ENCODE measurements at regions of chr15 and their contacts with region 1.

Region 1: DNA sequence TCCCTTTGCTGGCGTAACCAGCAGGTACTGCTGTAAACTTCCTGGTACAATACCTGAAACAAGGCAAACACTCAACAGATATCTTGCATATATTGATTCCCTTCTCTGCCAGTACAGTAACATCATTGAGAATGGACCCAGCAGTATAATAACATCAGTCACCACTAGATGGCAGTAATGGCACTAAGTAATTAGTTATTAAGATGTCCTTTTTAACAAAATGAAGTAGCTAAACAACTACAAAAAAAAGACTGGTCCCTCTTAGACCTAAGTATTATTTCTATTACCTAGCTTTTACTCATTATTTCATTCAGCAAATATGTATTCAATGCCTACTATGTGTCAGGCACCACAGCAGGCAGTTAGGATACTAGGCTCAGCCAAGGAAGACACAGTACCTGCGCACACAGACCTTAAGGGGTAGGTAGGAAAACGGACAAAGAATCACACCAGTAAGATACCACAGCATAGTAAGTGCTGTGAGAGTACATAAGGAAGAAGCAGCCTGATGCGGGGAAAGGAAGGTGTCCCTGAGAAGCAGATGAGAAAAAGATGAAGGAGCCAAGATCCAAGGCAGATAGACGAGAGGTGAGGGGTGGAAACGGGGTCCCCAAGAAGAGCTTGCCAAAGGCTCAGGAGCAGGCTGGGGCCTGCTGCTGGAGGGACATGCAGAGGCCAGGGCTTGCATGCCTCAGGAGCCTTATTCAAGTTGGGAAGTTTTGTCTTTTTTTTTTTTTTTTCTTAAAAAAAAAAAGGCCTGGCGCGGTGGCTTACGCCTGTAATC is 102.8 kb upstream of the CHD2 start:
- DNase-seq: no peak
- ATAC-seq: peak; percentile 86
- H3K4me3 Mint-ChIP-seq: no peak overlapping the region
- H3K27ac Mint-ChIP-seq: no peak overlapping the region
- H3K4me1 Mint-ChIP-seq: peaks cover 12% of the 10 kb centered on the region
- H3K27me3 Mint-ChIP-seq: no peaks in the 10 kb centered on the region

Region 2: GRCh38 chr15:92780843-92781242 is 16.5 kb before region 1 on chr15:
- CTCF ChIA-PET with region 1: no interaction called
- DNase-seq: no peak
- ATAC-seq: no peak
- H3K4me3 Mint-ChIP-seq: no peak overlapping the region
- H3K27ac Mint-ChIP-seq: no peak overlapping the region
- H3K4me1 Mint-ChIP-seq: no peaks in the 10 kb centered on the region
- H3K27me3 Mint-ChIP-seq: no peaks in the 10 kb centered on the region

Region 3: DNA sequence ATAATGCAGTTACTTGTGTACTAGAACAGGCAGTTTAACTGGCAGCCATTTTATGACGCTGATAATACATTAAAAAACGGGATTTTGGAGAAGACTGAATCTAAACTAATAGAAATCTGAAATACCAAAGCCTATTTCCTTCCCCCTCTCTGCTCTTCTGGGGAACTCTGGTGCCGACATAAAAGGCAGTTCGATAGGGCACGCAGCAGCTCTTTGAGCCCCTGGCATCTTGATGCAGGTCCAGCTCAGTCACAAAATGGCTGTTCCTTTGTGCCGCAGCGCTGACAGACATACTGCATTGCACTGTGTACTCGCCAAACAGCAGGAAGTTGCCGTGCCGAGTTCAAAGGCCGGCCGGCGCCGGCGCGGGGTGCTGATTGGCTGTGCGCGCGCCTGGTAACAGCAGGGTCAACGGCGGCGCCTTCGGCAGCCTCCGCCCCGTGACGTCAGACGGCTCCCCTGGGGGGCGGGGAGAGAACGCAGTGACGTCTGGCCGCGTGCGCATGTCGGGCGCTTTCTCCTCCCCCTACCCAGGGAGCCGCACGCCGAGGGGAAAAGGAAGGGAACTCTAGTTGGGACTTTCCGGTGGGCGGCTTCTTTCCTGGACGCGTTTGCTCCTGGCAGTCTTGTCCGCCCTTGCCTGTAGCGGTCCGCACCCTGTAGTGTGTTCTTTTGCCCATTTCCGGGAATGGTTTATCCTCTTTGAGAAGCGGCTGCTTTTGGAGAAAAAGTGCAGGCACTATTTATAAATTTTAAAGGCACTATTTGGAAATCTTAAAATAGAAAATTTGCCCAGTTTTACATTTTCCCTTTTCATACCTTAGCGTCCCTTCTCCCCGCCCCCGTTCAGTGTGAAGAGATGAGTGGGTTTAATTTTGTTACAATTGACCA is 106.8 kb after region 1 on chr15:
- CTCF ChIA-PET with region 1: interaction called, 12 read pairs
- DNase-seq: peak; percentile 100
- ATAC-seq: peak; percentile 87
- H3K4me3 Mint-ChIP-seq: peak overlapping the region; percentile 79
- H3K27ac Mint-ChIP-seq: peak overlapping the region; percentile 99
- H3K4me1 Mint-ChIP-seq: peaks cover 51% of the 10 kb centered on the region
- H3K27me3 Mint-ChIP-seq: no peaks in the 10 kb centered on the region

Region 4: DNA sequence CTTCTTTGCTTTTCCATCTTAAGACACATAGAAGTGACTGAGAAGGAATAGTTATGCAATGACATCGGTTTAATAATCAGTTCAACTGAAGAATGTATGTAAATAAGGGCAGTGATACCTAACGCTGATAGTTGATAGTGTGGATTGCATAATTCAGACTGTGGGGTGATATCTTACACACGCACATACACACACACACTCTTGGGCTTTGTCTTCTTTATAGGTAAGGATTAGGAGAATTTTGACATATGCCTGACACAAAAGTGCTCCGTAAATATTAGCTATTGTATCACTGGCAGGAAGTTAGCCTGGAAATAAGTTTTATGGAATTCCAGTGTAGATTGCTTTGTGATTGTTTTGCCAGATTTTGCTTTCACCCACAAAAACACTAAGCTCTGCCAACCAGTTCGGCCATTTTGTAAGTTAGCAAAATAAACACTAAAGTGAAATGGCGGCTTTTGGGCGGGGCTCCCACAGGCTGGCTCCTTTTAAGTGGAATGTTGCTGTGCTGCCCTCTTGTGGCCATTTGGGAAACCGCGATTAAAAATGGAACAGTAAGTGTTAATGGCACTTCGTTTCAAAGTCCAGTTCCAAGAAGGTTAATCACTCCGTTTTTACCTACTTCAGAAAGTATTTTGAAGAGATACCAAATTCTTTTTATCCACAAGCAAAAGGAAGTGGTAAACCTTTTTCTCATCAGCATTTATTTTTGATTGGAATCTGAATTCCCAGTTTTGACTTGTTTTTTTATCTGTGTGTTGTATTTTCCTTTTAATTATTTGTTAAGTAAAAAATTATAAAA is 120.4 kb after region 1 on chr15:
- CTCF ChIA-PET with region 1: interaction called, 42 read pairs
- DNase-seq: peak; percentile 96
- ATAC-seq: peak; percentile 54
- H3K4me3 Mint-ChIP-seq: peak overlapping the region; percentile 32
- H3K27ac Mint-ChIP-seq: peak overlapping the region; percentile 86
- H3K4me1 Mint-ChIP-seq: peaks cover 83% of the 10 kb centered on the region
- H3K27me3 Mint-ChIP-seq: no peaks in the 10 kb centered on the region

Region 5: GRCh38 chr15:92930776-92931175 is 133.4 kb after region 1 on chr15:
- CTCF ChIA-PET with region 1: interaction called, 11 read pairs
- DNase-seq: no peak
- ATAC-seq: no peak
- H3K4me3 Mint-ChIP-seq: no peak overlapping the region
- H3K27ac Mint-ChIP-seq: no peak overlapping the region
- H3K4me1 Mint-ChIP-seq: peaks cover 25% of the 10 kb centered on the region
- H3K27me3 Mint-ChIP-seq: no peaks in the 10 kb centered on the region

Region 6: DNA sequence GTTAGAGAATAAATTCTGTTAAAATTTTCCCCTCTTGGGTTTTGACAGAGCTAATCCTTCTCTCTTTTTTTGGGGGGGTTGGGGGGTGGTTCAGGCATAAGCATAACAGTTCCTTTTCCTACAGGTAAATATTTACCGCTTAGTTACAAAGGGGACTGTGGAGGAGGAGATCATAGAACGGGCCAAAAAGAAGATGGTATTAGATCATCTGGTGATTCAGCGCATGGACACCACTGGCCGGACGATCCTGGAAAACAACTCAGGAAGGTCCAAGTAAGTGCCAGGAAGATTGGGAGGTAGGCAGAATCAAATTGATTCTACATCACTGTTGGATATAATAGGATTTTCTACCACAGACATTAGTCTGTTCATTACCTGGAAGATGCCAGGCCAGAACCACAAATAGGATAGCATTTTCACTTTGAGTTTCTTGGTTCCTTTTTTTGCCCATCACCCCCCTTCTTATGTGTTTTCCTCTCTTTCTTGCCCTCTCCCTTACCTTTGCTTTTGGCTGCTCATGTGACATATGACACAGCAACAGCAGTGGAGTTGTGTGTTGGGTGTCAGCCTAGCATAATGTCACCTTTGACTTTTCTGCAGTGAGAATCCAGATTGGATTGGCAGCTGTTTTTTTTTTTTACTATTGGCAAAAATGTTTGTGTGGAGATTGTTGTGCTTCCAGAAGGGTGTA is 181.8 kb after region 1 on chr15:
- CTCF ChIA-PET with region 1: interaction called, 14 read pairs
- DNase-seq: no peak
- ATAC-seq: no peak
- H3K4me3 Mint-ChIP-seq: no peak overlapping the region
- H3K27ac Mint-ChIP-seq: no peak overlapping the region
- H3K4me1 Mint-ChIP-seq: peaks cover 14% of the 10 kb centered on the region
- H3K27me3 Mint-ChIP-seq: no peaks in the 10 kb centered on the region

Region 7: GRCh38 chr15:93030430-93031105 is 233.2 kb after region 1 on chr15:
- CTCF ChIA-PET with region 1: interaction called, 54 read pairs
- DNase-seq: peak; percentile 73
- ATAC-seq: peak; percentile 86
- H3K4me3 Mint-ChIP-seq: no peak overlapping the region
- H3K27ac Mint-ChIP-seq: no peak overlapping the region
- H3K4me1 Mint-ChIP-seq: peaks cover 12% of the 10 kb centered on the region
- H3K27me3 Mint-ChIP-seq: no peaks in the 10 kb centered on the region